PC-3 (cell line): ENCODE measurements at regions of chr1 and their contacts with region 1.

Region 1: GRCh38 chr1:85576642-85577418 is 3.7 kb upstream of the CCN1 start:
- DNase-seq: peak; percentile 88
- ATAC-seq: peak; percentile 46
- H3K4me3 ChIP-seq: peak overlapping the region; percentile 79
- H3K27ac ChIP-seq: peak overlapping the region; percentile 49
- H3K4me1 ChIP-seq: peaks cover 47% of the 10 kb centered on the region
- H3K27me3 ChIP-seq: no peaks in the 10 kb centered on the region
- CTCF ChIP-seq: peak; percentile 70

Region 2: DNA sequence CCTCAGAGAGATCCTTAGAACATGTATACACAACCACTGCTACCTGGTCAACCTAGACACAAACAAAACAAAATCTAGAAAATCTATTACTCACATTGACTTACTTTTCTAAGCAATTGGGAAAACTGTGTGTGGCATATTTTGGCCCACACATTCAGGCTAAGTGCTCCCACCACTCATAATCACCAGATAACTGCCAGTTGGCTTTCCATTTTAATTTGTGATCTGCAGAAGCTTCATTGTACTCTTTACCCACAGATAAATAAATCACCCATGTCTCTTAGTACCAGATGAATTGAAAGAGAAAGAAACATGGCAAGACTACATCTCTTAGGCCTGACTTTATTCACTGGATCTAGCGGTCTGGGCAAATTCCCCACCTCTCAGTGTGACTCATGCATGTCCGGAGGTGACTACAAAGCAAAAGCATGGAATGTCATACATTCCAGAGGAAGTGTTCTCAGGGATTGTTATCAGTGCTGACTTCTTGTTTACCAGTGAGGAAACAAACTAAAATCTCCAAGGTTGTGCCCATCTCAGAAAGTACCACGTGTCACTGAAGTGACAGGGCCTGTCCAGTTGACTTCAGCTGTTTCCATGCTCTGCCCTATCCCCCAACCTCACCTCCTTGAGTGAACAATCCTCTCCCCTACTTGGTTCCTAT is 248.0 kb before region 1 on chr1:
- CTCF ChIA-PET with region 1: no interaction called
- POLR2A ChIA-PET with region 1: no interaction called
- intact Hi-C with region 1: loop called (anchors 5 kb)
- DNase-seq: peak; percentile 99
- ATAC-seq: peak; percentile 90
- H3K4me3 ChIP-seq: no peak overlapping the region
- H3K27ac ChIP-seq: peak overlapping the region; percentile 90
- H3K4me1 ChIP-seq: peaks cover 61% of the 10 kb centered on the region
- H3K27me3 ChIP-seq: no peaks in the 10 kb centered on the region
- CTCF ChIP-seq: no peak

Region 3: DNA sequence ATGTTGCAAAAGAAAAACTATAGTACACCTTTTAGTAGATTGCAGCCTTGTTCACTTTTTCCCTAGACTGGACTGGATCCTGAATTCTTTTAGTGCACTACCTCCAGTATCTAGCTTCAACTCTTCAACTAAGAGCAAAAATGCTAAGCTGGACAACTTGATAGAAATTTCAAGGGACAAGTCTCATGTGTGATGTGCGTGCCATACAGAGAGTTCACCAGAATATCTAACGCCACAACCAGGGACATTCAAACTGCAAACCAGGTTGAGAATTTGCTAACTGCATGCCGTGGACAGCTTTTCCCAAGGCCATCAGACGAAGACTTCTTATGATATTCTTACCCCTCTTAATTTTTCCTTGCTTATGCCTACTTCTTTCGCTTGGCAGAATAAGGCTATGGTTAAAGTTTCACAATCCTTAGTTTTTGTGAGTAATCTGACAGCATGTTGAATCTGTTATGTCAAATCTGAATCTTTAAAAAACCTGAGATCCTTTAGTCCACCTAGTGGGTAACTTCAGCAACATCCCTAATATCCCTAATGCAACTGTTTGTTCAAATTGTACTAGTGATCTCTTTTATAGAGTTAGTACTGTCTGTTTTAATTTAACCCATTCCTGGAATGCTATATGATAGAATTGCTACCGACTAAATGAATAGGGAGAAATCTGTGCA is 178.3 kb before region 1 on chr1:
- CTCF ChIA-PET with region 1: no interaction called
- POLR2A ChIA-PET with region 1: no interaction called
- intact Hi-C with region 1: loop called (anchors 2 kb)
- DNase-seq: peak; percentile 72
- ATAC-seq: peak; percentile 81
- H3K4me3 ChIP-seq: no peak overlapping the region
- H3K27ac ChIP-seq: no peak overlapping the region
- H3K4me1 ChIP-seq: peaks cover 18% of the 10 kb centered on the region; the same call in 1 of the 2 replicates
- H3K27me3 ChIP-seq: no peaks in the 10 kb centered on the region
- CTCF ChIP-seq: peak; percentile 77

Region 4: GRCh38 chr1:85494904-85495266 is 81.9 kb before region 1 on chr1:
- CTCF ChIA-PET with region 1: no interaction called
- POLR2A ChIA-PET with region 1: no interaction called
- intact Hi-C with region 1: loop called (anchors 2 kb)
- DNase-seq: peak; percentile 54
- ATAC-seq: peak; percentile 46
- H3K4me3 ChIP-seq: peak overlapping the region; percentile 48; the same call in 1 of the 2 replicates
- H3K27ac ChIP-seq: peak overlapping the region; percentile 66
- H3K4me1 ChIP-seq: peaks cover 34% of the 10 kb centered on the region
- H3K27me3 ChIP-seq: no peaks in the 10 kb centered on the region
- CTCF ChIP-seq: peak; percentile 59

Region 5: DNA sequence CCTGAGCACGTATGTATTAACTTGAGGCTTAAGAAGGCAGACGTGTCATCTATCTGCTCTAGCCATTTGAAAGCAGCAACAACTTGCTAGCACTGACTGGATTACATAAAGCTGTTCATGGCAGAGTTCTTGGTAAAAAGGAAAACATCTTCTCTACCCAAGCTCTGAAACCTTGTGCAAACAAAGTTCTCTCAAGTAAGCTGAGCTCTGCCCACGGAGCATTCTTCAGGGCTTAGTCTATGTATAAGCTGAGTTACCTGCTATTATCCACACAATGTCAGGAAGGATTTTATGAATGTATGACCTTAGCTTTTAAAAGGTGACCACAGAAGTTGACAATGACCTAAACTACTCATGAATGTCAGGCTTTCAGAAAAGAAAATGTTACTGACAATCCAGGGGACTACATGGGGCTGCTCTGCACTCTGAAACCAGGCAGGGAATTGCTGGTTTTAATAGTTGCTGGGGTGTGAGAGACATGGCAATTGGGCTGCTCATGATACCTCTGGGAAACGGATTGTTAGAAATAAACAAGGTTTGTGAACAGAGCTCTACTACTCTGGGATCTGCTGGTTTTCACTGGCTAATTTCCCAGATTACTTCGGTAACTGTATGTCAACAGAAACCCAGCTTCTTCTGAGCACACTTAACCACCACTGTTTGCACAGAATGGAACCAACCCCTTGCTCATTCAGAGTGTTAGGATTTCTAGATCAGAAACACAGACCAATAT is 25.9 kb before region 1 on chr1:
- CTCF ChIA-PET with region 1: interaction called, 8 read pairs
- POLR2A ChIA-PET with region 1: interaction called, 14 read pairs
- intact Hi-C with region 1: loop called (anchors 1 kb)
- DNase-seq: peak; percentile 97
- ATAC-seq: peak; percentile 93
- H3K4me3 ChIP-seq: peak overlapping the region; percentile 41
- H3K27ac ChIP-seq: peak overlapping the region; percentile 86
- H3K4me1 ChIP-seq: peaks cover 77% of the 10 kb centered on the region
- H3K27me3 ChIP-seq: no peaks in the 10 kb centered on the region
- CTCF ChIP-seq: no peak

Region 6: DNA sequence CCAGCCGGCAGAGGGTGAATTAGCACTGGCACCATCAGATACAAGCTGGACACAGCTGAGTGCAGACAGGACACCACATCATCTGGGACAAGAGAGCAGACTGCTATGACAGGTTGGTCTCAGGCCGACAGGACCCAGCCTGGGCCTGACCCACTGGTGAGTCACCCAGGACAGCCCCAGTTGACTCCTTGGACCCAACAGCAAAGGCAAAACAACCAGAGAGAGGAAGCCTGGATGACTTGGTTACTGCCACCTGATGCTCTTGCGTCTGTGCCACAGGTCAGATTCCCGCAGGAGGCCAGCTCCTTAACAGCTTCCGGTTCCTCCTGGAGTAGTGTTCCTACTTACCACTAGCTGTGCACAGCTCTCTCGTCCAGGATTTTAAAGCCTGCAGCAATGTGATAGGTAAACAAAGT is 22.3 kb after region 1 on chr1:
- CTCF ChIA-PET with region 1: no interaction called
- POLR2A ChIA-PET with region 1: no interaction called
- intact Hi-C with region 1: no loop called
- DNase-seq: peak; percentile 42
- ATAC-seq: peak; percentile 77
- H3K4me3 ChIP-seq: no peak overlapping the region
- H3K27ac ChIP-seq: no peak overlapping the region
- H3K4me1 ChIP-seq: peaks cover 8% of the 10 kb centered on the region; the same call in 1 of the 2 replicates
- H3K27me3 ChIP-seq: no peaks in the 10 kb centered on the region
- CTCF ChIP-seq: no peak; the same call in 1 of the 2 replicates

Region 7: DNA sequence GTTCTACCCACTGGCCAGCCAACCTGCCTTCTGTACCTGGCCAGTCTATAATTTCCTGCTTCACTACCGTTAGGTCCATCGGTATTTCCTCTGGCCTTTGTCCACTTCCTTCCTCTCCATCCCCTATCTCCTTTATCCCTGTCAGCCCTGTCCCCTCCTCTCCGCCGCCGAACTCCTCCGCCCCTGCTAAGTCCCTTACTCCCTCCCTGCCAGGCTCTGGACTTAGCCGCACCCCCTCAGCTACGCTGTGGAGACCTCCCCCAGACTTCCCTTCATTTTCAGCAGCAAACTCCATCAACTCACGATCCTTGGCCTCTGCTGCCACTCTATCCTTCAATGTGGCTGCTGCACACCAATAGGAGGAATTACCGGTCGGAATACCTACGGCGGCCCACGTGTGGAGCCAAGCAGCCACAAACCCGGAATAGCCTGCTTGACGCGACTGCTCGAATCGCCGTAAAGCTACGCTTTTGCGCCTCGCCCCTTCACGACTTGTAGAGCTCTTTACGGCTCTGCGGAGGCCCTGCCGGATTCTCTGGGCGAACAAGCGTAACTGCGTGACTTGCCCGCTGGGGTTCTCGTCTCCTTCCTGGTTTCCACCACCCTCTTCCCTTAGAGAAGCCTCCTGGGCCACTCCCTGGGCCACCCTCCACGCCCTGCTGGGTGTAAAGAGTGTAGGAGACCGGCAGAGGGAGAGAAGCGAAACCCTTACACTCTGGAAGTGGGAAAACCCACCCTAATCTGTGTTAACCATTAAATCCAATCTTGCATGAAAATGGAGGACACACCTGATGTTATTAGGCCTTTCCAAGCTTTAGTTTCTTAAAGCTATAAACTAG is 131.4 kb after region 1 on chr1 and contains the start of gene ZNHIT6:
- CTCF ChIA-PET with region 1: no interaction called
- POLR2A ChIA-PET with region 1: no interaction called
- intact Hi-C with region 1: loop called (anchors 5 kb)
- DNase-seq: peak; percentile 97
- ATAC-seq: peak; percentile 90
- H3K4me3 ChIP-seq: peak within 1 kb of the TSS; percentile 92
- H3K27ac ChIP-seq: peak within 1 kb of the TSS; percentile 69
- H3K4me1 ChIP-seq: peaks cover 22% of the 10 kb centered on the region
- H3K27me3 ChIP-seq: no peaks in the 10 kb centered on the region
- CTCF ChIP-seq: peak; percentile 55
- total RNA-seq, gene ZNHIT6: 18.3 and 21.1 TPM in 2 replicates